ENCODE measurements at regions of chr10 and their contacts with region 1.

Region 1: DNA sequence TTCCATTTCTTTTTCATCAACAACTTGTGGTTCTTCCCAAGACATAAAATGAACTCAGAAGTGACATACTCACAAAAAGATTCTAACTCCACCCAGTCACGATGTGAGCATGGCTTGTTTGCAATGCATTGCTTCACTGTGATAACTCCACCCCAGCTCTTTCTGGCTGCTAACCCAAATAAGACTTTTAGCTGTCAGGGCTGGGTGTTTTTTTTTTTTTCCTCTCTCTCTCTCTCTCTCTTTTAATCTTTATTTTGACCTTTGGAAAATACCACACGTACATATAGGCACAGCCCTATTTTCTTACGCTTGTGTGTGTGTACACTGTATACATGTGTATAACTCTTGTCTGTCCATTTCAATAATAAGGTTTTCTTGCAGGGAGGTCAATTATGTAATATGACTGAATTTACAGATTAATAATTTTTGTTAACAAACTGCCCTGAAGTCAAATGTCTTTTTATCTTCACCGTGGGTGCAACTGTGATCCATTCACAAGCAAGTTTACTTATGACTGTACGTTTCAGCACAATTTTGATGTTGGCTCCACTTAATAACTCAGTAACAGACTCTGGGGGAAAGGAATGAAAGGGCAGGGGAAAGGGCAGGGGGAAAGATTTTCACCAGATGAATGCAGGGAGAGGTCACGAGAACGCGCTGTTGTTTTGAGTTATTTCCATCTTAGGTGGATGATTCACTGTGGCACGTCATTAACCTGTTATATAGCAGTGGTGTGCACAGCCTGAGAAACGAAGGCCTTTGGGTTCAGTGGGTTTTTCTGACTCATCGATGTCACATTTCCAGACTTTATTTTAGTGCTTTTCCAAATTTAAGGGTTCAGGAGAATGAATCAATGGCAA is 49.1 kb downstream of the APBB1IP start:
- DNase-seq: peak; percentile 89
- H3K4me3 Mint-ChIP-seq: peak overlapping the region; percentile 56
- H3K27ac Mint-ChIP-seq: peak overlapping the region; percentile 98
- H3K4me1 Mint-ChIP-seq: peaks cover 68% of the 10 kb centered on the region
- H3K27me3 Mint-ChIP-seq: no peaks in the 10 kb centered on the region

Region 2: GRCh38 chr10:26430641-26431164 is 56.5 kb before region 1 on chr10:
- CTCF ChIA-PET with region 1: no interaction called
- intact Hi-C with region 1: loop called (anchors 1 kb)
- DNase-seq: peak; percentile 64
- H3K4me3 Mint-ChIP-seq: peak overlapping the region; percentile 46
- H3K27ac Mint-ChIP-seq: peak overlapping the region; percentile 83
- H3K4me1 Mint-ChIP-seq: peaks cover 26% of the 10 kb centered on the region
- H3K27me3 Mint-ChIP-seq: no peaks in the 10 kb centered on the region

Region 3: GRCh38 chr10:26464632-26465280 is 22.5 kb before region 1 on chr10:
- CTCF ChIA-PET with region 1: interaction called, 5 read pairs
- intact Hi-C with region 1: loop called (anchors 1 kb)
- DNase-seq: no peak
- H3K4me3 Mint-ChIP-seq: no peak overlapping the region
- H3K27ac Mint-ChIP-seq: peak overlapping the region; percentile 69
- H3K4me1 Mint-ChIP-seq: peaks cover 74% of the 10 kb centered on the region
- H3K27me3 Mint-ChIP-seq: no peaks in the 10 kb centered on the region

Region 4: GRCh38 chr10:26737730-26738129 is 250.5 kb after region 1 on chr10:
- CTCF ChIA-PET with region 1: no interaction called
- intact Hi-C with region 1: loop called (anchors 5 kb)
- DNase-seq: peak; percentile 75
- H3K4me3 Mint-ChIP-seq: no peak overlapping the region
- H3K27ac Mint-ChIP-seq: peak overlapping the region; percentile 88
- H3K4me1 Mint-ChIP-seq: peaks cover 36% of the 10 kb centered on the region
- H3K27me3 Mint-ChIP-seq: no peaks in the 10 kb centered on the region

Region 5: DNA sequence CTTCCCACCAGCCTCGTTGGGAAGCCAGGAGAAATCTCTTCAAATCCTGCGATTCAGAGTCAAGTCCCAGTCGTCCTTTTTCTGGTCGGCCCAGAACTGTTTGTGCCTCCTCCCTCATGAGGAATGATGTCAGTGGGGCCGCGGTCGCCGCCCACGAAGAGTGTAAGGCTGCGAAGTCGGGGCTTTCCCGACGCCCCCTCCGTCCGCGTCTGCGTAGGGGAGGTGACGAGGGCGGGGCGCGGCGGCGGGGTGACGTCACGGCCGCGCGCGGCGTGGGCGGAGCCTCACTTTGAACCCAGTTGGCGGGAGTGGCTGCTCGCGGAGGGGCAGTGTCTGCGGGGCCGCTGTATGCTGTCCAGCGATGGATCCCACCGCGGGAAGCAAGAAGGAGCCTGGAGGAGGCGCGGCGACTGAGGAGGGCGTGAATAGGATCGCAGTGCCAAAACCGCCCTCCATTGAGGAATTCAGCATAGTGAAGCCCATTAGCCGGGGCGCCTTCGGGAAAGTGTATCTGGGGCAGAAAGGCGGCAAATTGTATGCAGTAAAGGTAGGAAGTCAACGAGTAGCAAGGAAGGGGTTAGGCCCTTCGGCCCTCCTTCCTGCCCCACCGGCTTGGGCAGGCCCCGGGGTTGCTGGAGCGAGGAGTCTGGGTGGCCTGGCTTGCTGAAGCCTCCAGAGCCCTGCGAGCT is 668.0 kb after region 1 on chr10 and contains the start of gene MASTL:
- CTCF ChIA-PET with region 1: no interaction called
- intact Hi-C with region 1: loop called (anchors 2 kb)
- DNase-seq: peak; percentile 95
- H3K4me3 Mint-ChIP-seq: peak within 1 kb of the TSS; percentile 94
- H3K27ac Mint-ChIP-seq: peak within 1 kb of the TSS; percentile 100
- H3K4me1 Mint-ChIP-seq: peaks cover 46% of the 10 kb centered on the region
- H3K27me3 Mint-ChIP-seq: no peaks in the 10 kb centered on the region
- total RNA-seq, gene MASTL: 50.7 to 51.3 TPM